ENCODE measurements at regions of chr1 and their contacts with region 1.

Region 1: GRCh38 chr1:239719642-239720258 is 333.4 kb downstream of the CHRM3 start:
- DNase-seq: peak in 8 of 9 donors; percentile 47 to 88 (median 84)
- ATAC-seq: peak; percentile 90
- H3K4me3 ChIP-seq: peak overlapping the region; percentile 70
- H3K4me3 Mint-ChIP-seq: no peak overlapping the region
- H3K27ac ChIP-seq: peak overlapping the region; percentile 80
- H3K27ac Mint-ChIP-seq: peak overlapping the region in 1 of 9 donors; percentile 96
- H3K4me1 ChIP-seq: peaks cover 17 to 38% of the 10 kb centered on the region in 2 donors
- H3K4me1 Mint-ChIP-seq: peaks cover 29 to 44% (median 39%) of the 10 kb centered on the region in 7 donors
- H3K27me3 ChIP-seq: no peaks in the 10 kb centered on the region
- H3K27me3 Mint-ChIP-seq: no peaks in the 10 kb centered on the region

Region 2: DNA sequence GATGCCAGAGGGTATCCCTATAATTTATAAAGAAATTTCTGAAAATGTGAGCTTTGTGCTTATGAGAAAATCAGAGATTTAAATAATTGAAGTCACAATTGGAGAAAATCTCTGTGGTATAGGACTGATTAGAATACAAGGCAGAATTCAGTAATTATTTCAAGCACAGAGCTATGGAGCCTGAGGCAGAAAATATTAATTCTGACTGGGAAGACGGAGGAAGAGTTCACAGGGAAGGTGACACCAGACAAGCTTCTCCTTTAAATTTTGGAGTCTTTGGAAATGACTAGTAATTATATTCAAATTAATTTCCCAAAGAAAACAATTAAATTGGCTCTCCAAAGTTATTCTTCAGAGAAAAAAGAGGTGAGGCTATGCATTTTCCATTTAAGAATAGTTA is 211.9 kb before region 1 on chr1:
- CTCF ChIA-PET with region 1: no interaction called
- POLR2A ChIA-PET with region 1: no interaction called
- intact Hi-C with region 1: loop called in 1 of 2 experiments (anchors 5 kb)
- DNase-seq: no peak
- ATAC-seq: no peak
- H3K4me3 ChIP-seq: no peak overlapping the region
- H3K4me3 Mint-ChIP-seq: no peak overlapping the region
- H3K27ac ChIP-seq: no peak overlapping the region
- H3K27ac Mint-ChIP-seq: no peak overlapping the region
- H3K4me1 ChIP-seq: no peaks in the 10 kb centered on the region
- H3K4me1 Mint-ChIP-seq: peaks cover 0 to 5% (median 3%) of the 10 kb centered on the region in 7 donors
- H3K27me3 ChIP-seq: no peaks in the 10 kb centered on the region
- H3K27me3 Mint-ChIP-seq: no peaks in the 10 kb centered on the region

Region 3: GRCh38 chr1:239587066-239587465 is 132.7 kb before region 1 on chr1:
- CTCF ChIA-PET with region 1: interaction called, 3 read pairs
- POLR2A ChIA-PET with region 1: interaction called, 4 read pairs
- intact Hi-C with region 1: loop called in 1 of 2 experiments (anchors 1 kb)
- DNase-seq: peak in 7 of 9 donors; percentile 37 to 65 (median 54)
- ATAC-seq: peak; percentile 95
- H3K4me3 ChIP-seq: no peak overlapping the region
- H3K4me3 Mint-ChIP-seq: peak overlapping the region in 3 of 10 donors; percentile 14 to 26 (median 23)
- H3K27ac ChIP-seq: no peak overlapping the region
- H3K27ac Mint-ChIP-seq: peak overlapping the region in 6 of 9 donors; percentile 3 to 60 (median 40)
- H3K4me1 ChIP-seq: peaks cover 0 to 5% of the 10 kb centered on the region in 2 donors
- H3K4me1 Mint-ChIP-seq: peaks cover 5 to 17% (median 11%) of the 10 kb centered on the region in 7 donors
- H3K27me3 ChIP-seq: no peaks in the 10 kb centered on the region
- H3K27me3 Mint-ChIP-seq: peaks cover 0 to 9% (median 0%) of the 10 kb centered on the region in 5 donors

Region 4: GRCh38 chr1:239731082-239731748 is 11.5 kb after region 1 on chr1:
- CTCF ChIA-PET with region 1: interaction called, 5 read pairs
- POLR2A ChIA-PET with region 1: interaction called, 16 read pairs
- intact Hi-C with region 1: loop called in 1 of 2 experiments (anchors 1 kb)
- DNase-seq: no peak
- ATAC-seq: no peak
- H3K4me3 ChIP-seq: no peak overlapping the region
- H3K4me3 Mint-ChIP-seq: no peak overlapping the region
- H3K27ac ChIP-seq: no peak overlapping the region
- H3K27ac Mint-ChIP-seq: no peak overlapping the region
- H3K4me1 ChIP-seq: no peaks in the 10 kb centered on the region
- H3K4me1 Mint-ChIP-seq: peaks cover 4 to 43% (median 23%) of the 10 kb centered on the region in 7 donors
- H3K27me3 ChIP-seq: no peaks in the 10 kb centered on the region
- H3K27me3 Mint-ChIP-seq: no peaks in the 10 kb centered on the region

Region 5: DNA sequence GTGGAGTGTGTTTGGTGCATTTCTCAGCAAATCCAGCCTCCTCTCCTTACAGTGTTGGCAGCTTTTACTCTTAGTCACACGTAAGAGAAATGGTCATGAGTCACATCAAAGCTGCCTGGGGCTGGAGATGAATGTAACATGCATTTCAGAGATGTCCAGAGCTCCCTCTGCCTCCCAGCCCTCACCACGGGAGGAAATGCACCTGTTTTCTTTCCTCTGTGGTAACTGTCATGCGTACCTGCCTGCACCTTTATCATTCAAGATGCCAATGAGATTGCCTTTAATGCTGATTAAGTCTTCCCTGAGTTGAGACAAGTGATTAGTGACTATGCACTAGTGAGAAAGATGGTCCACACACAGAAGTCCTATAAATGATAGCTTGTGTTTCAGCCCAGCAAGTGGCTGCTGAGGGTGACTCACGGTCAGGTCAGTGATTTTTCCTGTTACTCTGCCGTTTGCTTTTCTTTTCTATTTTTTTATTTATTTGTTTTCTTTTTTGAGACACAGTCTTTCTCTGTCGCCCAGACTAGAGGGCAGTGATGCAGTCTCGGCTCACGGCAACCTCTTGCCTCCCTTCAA is 94.6 kb after region 1 on chr1:
- CTCF ChIA-PET with region 1: no interaction called
- POLR2A ChIA-PET with region 1: no interaction called
- intact Hi-C with region 1: loop called in 1 of 2 experiments (anchors 2 kb)
- DNase-seq: no peak
- ATAC-seq: peak; percentile 30
- H3K4me3 ChIP-seq: no peak overlapping the region
- H3K4me3 Mint-ChIP-seq: no peak overlapping the region
- H3K27ac ChIP-seq: no peak overlapping the region
- H3K27ac Mint-ChIP-seq: peak overlapping the region in 2 of 9 donors; percentile 28 to 31
- H3K4me1 ChIP-seq: peaks cover 4 to 11% of the 10 kb centered on the region in 2 donors
- H3K4me1 Mint-ChIP-seq: peaks cover 18 to 32% (median 22%) of the 10 kb centered on the region in 7 donors
- H3K27me3 ChIP-seq: no peaks in the 10 kb centered on the region
- H3K27me3 Mint-ChIP-seq: no peaks in the 10 kb centered on the region

Region 6: GRCh38 chr1:241519308-241520079 is 1799.7 kb after region 1 on chr1 and contains the start of gene FH:
- CTCF ChIA-PET with region 1: no interaction called
- POLR2A ChIA-PET with region 1: no interaction called
- intact Hi-C with region 1: loop called in 1 of 2 experiments (anchors 1 kb)
- DNase-seq: peak; percentile 83 to 96 (median 94)
- ATAC-seq: peak; percentile 99
- H3K4me3 ChIP-seq: peak within 1 kb of the TSS; percentile 66
- H3K4me3 Mint-ChIP-seq: peak within 1 kb of the TSS in 8 of 10 donors; percentile 85 to 96 (median 92)
- H3K27ac ChIP-seq: peak within 1 kb of the TSS; percentile 82
- H3K27ac Mint-ChIP-seq: peak within 1 kb of the TSS; percentile 56 to 92 (median 82)
- H3K4me1 ChIP-seq: peaks cover 5 to 6% of the 10 kb centered on the region in 2 donors
- H3K4me1 Mint-ChIP-seq: peaks cover 2 to 46% (median 38%) of the 10 kb centered on the region in 7 donors
- H3K27me3 ChIP-seq: no peaks in the 10 kb centered on the region
- H3K27me3 Mint-ChIP-seq: peaks cover 15 to 28% (median 26%) of the 10 kb centered on the region in 5 donors
- total RNA-seq, gene FH: 17.3 to 57.9 (median 21.8) TPM

Measured in naive thymus-derived CD4-positive, alpha-beta T cell (primary cell).